OCI-LY7 (cell line): ENCODE measurements at regions of chr15 and their contacts with region 1.

Region 1: GRCh38 chr15:41989259-41989933 is 17.0 kb upstream of the EHD4 start:
- DNase-seq: peak; percentile 77
- H3K4me3 ChIP-seq: no peak overlapping the region
- H3K27ac ChIP-seq: no peak overlapping the region
- H3K4me1 ChIP-seq: no peaks in the 10 kb centered on the region
- CTCF ChIP-seq: peak; percentile 90

Region 2: DNA sequence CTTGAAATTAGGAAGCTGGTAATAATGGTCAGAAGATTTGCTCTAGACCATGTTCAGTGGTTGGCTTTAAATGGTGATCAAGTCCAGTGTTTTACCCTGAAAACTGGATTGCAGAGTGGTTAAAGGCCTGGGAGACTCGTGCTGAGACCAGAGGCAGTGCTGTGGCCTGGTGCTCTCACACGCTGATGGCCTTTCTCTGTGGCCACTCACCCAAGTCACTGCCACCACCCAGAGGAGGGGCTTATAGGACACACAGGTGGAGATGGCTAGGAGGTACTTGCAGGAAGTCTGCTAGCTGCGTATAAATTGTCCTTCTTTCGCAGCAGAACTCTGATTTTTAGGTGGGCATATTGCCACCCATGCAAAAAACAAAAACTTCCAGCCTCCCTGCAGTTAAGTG is 10.9 kb before region 1 on chr15:
- CTCF ChIA-PET with region 1: no interaction called
- POLR2A ChIA-PET with region 1: no interaction called
- intact Hi-C with region 1: no loop called
- DNase-seq: no peak
- H3K4me3 ChIP-seq: no peak overlapping the region
- H3K27ac ChIP-seq: no peak overlapping the region
- H3K4me1 ChIP-seq: no peaks in the 10 kb centered on the region
- CTCF ChIP-seq: no peak

Region 3: DNA sequence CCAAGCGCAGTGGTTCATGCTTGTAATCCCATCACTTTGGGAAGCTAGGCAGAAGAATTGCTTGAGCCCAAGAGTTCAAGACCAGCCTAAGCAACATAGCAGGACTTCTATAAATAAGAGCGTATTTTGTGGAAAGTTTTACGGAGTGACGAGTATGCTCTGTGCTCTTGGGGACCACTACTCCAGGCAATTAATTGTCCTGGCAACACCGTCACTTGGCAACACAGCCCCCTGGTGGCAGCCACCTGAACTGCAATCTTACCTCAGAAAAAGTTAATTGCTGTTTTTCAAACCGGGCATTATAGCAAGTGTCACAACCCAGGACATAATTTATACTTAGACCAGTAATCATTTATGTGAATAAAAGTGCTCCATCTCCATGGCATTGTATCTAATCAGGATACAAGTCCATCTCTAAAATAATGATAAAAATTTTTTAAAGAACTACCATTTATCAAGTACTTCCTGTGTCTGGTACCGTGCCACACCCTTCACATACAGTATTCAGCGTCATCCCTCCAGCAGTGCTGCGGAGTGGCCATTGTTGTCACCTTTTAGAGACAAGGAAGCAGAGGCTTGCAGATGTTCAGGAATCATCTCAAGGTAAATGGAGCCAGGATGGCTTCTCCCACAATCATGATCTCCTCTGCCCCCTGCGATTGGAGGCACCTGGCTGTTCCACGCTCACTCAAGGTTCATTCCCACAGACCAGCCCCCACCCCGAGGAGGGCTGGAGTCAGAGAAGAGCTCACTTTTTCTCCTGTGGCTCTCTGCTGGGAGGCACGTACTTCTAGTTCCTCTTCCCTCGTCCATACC is 70.5 kb after region 1 on chr15:
- CTCF ChIA-PET with region 1: interaction called, 4 read pairs
- POLR2A ChIA-PET with region 1: no interaction called
- intact Hi-C with region 1: loop called (anchors 1 kb)
- DNase-seq: peak; percentile 70
- H3K4me3 ChIP-seq: no peak overlapping the region
- H3K27ac ChIP-seq: no peak overlapping the region
- H3K4me1 ChIP-seq: peaks cover 5% of the 10 kb centered on the region
- CTCF ChIP-seq: peak; percentile 98

Region 4: DNA sequence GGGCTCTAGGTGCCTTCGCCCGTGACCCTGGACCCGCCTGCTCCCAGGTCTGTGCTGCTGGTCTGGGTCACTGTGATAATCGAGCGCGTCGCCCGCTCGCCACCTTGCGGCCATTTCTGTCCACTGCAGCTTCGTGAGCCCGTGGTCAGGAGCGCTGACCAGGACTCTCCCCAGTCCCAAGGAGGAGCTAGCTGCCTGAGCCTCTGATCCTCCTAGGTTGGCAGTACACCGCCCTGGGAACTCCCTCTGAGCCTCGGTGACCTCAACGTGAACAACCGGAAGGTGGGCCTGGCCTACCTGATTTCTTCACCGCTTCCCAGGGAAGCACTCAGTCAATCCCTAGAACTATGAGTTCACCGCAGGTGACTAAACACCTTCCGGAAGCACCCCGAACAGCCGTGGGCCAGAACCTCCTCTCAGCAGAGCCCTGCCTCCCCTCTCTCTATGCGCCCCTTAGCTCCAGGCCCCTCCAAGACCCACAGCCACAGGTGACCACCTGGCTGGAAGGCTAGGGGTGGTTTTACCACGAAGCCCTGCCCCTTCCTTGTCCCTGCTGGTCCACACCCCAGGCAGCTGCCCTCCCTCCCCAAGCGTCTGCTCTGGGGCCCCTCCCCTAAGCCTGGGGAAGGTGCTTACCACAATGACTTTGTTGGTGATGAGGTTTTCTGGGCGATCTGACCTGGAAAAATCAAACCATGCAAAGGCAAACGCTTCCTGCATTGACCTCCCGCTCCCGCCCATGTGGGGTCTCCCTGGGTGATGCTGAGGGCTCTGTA is 95.3 kb after region 1 on chr15:
- CTCF ChIA-PET with region 1: no interaction called
- POLR2A ChIA-PET with region 1: no interaction called
- intact Hi-C with region 1: loop called (anchors 1 kb)
- DNase-seq: peak; percentile 54
- H3K4me3 ChIP-seq: no peak overlapping the region
- H3K27ac ChIP-seq: no peak overlapping the region
- H3K4me1 ChIP-seq: no peaks in the 10 kb centered on the region
- CTCF ChIP-seq: peak; percentile 89

Region 5: DNA sequence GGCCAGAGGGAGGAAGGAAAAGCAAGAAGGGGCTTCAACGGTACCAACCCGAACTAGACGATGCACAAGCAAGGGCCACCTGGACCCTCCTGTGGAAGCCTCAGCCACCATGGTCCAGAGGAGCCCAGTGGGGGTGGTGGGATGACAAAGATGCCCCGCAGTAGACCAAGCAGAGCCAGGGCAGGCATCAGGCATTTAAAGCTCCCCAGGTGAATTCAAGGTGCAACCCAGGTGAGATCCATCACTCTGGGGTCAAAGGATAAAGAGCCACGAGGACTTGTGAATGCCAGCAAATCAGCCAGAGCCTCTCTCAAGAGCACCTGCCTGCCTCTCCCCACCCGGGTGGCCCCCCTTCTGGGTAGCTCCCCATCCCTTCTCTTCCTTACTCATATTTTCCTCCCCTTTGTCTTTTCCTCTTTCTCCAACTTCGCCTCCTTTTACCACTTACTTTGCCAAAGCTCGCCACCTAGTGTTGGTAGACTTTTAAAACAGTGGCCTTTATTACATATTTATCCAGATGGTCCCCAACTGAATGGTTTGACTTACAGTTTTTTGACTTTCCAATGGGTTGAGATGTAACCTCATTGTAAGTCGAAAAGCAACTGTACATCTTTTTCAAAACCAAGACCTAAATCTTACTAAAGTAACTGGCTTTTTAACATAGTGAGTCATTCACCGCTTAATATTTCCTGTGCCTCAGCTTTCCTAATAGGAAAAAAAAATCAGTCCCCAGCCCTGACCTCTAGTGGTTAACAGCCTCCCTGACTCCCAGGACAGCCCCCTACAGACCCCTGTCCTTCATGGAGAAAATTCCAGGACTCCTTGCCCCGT is 148.2 kb after region 1 on chr15:
- CTCF ChIA-PET with region 1: interaction called, 3 read pairs
- POLR2A ChIA-PET with region 1: no interaction called
- intact Hi-C with region 1: loop called (anchors 1 kb)
- DNase-seq: peak; percentile 66
- H3K4me3 ChIP-seq: no peak overlapping the region
- H3K27ac ChIP-seq: no peak overlapping the region
- H3K4me1 ChIP-seq: no peaks in the 10 kb centered on the region
- CTCF ChIP-seq: peak; percentile 92